Heart left ventricle (tissue), 16 donors: ENCODE measurements at regions of chr22 and their contacts with region 1.

Region 1: GRCh38 chr22:35524966-35525686 is 15.5 kb upstream of the RASD2 start:
- DNase-seq: peak in 2 of 5 donors; percentile 33 to 69
- ATAC-seq: peak; percentile 26 to 65 (median 37)
- H3K4me3 ChIP-seq: no peak overlapping the region
- H3K27ac ChIP-seq: peak overlapping the region in 7 of 12 donors; percentile 10 to 72 (median 44)
- H3K4me1 ChIP-seq: peaks cover 0 to 10% (median 0%) of the 10 kb centered on the region in 12 donors
- H3K27me3 ChIP-seq: peaks cover 0 to 11% (median 0%) of the 10 kb centered on the region in 9 donors
- CTCF ChIP-seq: no peak
- POLR2A ChIP-seq: no peak

Region 2: GRCh38 chr22:34902335-34902734 is 622.8 kb before region 1 on chr22:
- intact Hi-C with region 1: no loop called
- DNase-seq: no peak
- ATAC-seq: no peak
- H3K4me3 ChIP-seq: no peak overlapping the region
- H3K27ac ChIP-seq: no peak overlapping the region
- H3K4me1 ChIP-seq: no peaks in the 10 kb centered on the region
- H3K27me3 ChIP-seq: no peaks in the 10 kb centered on the region
- CTCF ChIP-seq: no peak
- POLR2A ChIP-seq: no peak

Region 3: DNA sequence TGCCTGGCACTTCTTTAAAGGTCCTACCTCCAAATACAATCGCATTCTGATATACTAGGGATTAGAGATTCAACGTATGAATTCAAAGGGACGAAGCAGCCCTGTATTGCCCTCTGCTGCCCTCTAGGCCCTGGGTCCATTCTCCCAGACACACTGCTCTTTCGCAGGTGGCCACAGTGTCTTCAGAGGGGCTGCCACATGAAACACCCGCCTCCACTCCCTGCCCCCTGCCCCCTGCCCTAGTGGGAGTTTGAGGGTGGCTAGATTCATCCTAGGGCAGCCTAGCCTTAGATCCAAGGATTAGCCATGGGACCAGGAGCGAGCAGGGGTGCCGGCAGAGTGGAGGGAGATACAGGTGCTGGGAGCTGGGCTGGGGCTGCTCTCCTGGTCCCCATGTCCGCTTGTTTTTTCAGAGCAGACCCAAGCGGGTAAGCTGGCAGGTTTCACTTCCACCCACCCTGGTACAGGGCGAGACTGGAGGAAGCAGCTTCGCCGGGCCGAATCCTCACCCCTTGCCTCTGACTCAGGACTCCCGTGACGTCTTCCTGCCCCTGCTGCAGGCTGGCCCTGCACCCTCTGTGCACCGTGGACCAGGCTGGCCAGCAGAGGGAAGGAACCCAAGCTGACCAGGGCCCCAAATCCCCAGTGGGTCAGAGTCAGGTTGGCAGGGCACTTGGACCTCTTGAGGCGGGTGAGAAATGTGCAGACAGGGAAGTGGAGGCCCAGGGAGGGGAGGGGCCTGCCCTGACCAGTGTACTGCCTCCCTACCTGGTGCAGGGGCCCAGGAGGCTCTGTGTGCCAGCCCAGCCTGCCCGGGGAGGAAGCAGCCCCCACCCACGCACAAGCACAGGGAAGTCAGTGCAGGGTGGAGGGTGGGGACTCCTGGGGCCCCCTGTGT is 172.7 kb before region 1 on chr22:
- intact Hi-C with region 1: no loop called
- DNase-seq: peak; percentile 73 to 87 (median 84)
- ATAC-seq: peak; percentile 3 to 48 (median 32)
- H3K4me3 ChIP-seq: peak overlapping the region in 1 of 12 donors; percentile 23
- H3K27ac ChIP-seq: peak overlapping the region in 8 of 12 donors; percentile 22 to 93 (median 36)
- H3K4me1 ChIP-seq: peaks cover 0 to 62% (median 11%) of the 10 kb centered on the region in 12 donors
- H3K27me3 ChIP-seq: no peaks in the 10 kb centered on the region
- CTCF ChIP-seq: peak in 8 of 12 donors; percentile 15 to 41 (median 32)
- POLR2A ChIP-seq: no peak

Region 4: GRCh38 chr22:35467681-35468434 is 57.3 kb before region 1 on chr22:
- intact Hi-C with region 1: loop called in 2 of 10 experiments (anchors 1 to 10 kb)
- DNase-seq: peak; percentile 74 to 93 (median 85)
- ATAC-seq: peak; percentile 94 to 98 (median 98)
- H3K4me3 ChIP-seq: no peak overlapping the region
- H3K27ac ChIP-seq: peak overlapping the region; percentile 64 to 92 (median 78)
- H3K4me1 ChIP-seq: peaks cover 0 to 24% (median 17%) of the 10 kb centered on the region in 12 donors
- H3K27me3 ChIP-seq: no peaks in the 10 kb centered on the region
- CTCF ChIP-seq: no peak
- POLR2A ChIP-seq: peak in 1 of 2 donors; percentile 20

Region 5: GRCh38 chr22:35539910-35540594 is 14.9 kb after region 1 on chr22:
- intact Hi-C with region 1: no loop called
- DNase-seq: peak; percentile 61 to 86 (median 65)
- ATAC-seq: peak in 3 of 4 donors; percentile 65 to 86 (median 72)
- H3K4me3 ChIP-seq: peak overlapping the region; percentile 36 to 70 (median 58)
- H3K27ac ChIP-seq: peak overlapping the region in 11 of 12 donors; percentile 56 to 89 (median 60)
- H3K4me1 ChIP-seq: peaks cover 3 to 42% (median 17%) of the 10 kb centered on the region in 12 donors
- H3K27me3 ChIP-seq: peaks cover 0 to 36% (median 0%) of the 10 kb centered on the region in 9 donors
- CTCF ChIP-seq: no peak
- POLR2A ChIP-seq: no peak

Region 6: DNA sequence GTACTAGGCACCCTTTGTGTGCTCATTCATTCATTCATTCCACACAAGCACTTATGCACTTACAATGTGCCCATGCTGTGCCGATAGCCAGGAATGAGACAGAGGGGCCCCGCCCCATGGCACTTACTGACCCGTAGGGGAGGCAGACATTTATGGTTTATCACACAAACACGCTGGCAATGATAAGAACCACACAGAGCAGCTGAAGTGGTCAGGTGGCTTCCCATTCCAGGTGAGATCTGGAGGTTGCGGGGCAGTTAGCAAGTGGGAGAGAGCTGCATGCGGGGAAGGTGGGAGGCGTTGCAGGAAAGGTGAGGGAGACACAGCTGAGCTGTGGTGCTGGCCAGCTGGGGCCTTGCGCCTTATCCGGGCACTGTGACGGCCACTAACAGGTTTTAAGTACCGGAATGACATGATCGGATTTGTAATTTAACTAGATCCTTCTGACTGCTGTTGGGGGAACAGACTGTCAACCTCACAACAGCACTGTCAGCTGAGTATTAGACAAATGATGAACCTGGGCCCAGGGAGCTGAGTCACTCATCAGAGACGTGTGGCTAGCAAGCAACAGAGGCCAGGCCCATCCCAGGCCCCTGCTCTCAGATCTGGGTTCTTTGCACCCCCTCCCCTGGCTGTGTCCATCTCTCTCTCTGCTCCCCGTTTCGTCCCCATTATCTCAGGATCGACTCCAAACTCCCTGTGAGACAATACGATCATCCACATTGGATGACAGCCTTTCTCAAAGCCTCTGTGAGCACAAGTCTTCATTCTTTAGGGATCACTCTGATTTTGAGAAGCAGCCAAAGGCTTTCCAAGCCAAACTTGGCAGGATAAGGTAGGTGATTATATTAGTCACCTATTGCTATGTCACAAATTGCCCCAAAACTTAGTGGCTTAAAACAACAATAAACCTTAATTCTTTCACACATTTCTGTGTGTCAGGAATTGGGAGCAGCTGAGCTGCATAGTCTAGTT is 43.9 kb after region 1 on chr22:
- intact Hi-C with region 1: no loop called
- DNase-seq: peak in 1 of 5 donors; percentile 26
- ATAC-seq: peak in 3 of 4 donors; percentile 11 to 37 (median 30)
- H3K4me3 ChIP-seq: no peak overlapping the region
- H3K27ac ChIP-seq: no peak overlapping the region
- H3K4me1 ChIP-seq: peaks cover 0 to 40% (median 15%) of the 10 kb centered on the region in 12 donors
- H3K27me3 ChIP-seq: peaks cover 0 to 3% (median 0%) of the 10 kb centered on the region in 9 donors
- CTCF ChIP-seq: no peak
- POLR2A ChIP-seq: no peak